B cell (primary cell): ENCODE measurements at regions of chr5 and their contacts with region 1.

Region 1: GRCh38 chr5:158695595-158696330 is 404.0 kb downstream of the EBF1 start:
- DNase-seq: peak; percentile 89
- ATAC-seq: peak; percentile 95
- H3K4me3 ChIP-seq: no peak overlapping the region
- H3K4me3 Mint-ChIP-seq: peak overlapping the region; percentile 35
- H3K27ac ChIP-seq: peak overlapping the region in 1 of 2 donors; percentile 53
- H3K27ac Mint-ChIP-seq: peak overlapping the region; percentile 28
- H3K4me1 ChIP-seq: peaks cover 17% of the 10 kb centered on the region in 2 donors
- H3K4me1 Mint-ChIP-seq: peaks cover 25% of the 10 kb centered on the region
- H3K27me3 ChIP-seq: no peaks in the 10 kb centered on the region
- H3K27me3 Mint-ChIP-seq: no peaks in the 10 kb centered on the region
- CTCF ChIP-seq: peak; percentile 99

Region 2: DNA sequence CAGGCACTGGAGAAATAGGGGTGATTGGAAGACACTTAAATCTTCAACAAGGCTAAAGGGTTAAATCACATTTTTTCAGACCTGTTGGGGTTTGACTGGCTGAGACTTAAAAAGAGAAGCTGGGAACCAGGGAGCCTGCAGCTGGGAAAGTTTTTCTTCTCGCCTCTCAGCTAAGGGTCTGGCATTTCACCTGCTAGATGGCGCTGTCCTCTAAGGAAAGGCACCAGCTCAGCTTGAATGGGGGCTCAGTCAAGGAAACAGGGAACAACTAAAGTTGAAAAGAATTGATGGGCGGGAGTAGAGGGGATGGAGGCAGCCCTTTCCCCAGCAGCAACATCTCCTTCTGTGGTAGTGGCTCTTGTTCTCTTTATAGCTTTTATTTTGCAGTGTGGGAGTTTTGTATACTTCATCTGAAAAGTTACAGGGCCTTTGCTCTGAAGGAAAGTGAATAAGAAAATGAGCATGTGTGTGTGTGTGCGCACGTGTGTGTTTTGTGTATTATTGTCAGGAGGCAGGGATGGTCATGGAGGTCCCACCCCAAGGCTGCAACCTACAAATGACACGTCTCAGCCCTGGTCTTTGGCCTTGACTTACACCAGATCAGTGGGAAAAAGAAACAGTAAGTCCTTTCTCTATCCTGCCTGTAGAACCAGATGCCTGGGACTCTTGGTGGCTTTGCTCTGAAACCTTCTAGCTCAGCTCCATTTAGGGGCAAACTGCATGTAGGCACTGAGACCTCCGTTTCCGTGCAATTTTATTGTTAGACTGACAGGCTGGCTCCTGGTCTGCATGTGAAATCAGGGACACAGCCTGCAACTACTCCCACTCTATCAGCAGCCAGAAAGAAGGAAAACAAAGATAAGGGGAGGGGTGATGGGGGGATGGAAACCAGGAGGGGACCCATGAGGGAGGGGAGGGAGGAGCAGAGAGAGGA is 520.6 kb before region 1 on chr5:
- CTCF ChIA-PET with region 1: interaction called, 134 read pairs
- POLR2A ChIA-PET with region 1: no interaction called
- intact Hi-C with region 1: loop called (anchors 1 kb)
- DNase-seq: peak; percentile 82
- ATAC-seq: peak; percentile 88
- H3K4me3 ChIP-seq: no peak overlapping the region
- H3K4me3 Mint-ChIP-seq: no peak overlapping the region
- H3K27ac ChIP-seq: no peak overlapping the region
- H3K27ac Mint-ChIP-seq: no peak overlapping the region
- H3K4me1 ChIP-seq: peaks cover 22 to 34% of the 10 kb centered on the region in 2 donors
- H3K4me1 Mint-ChIP-seq: peaks cover 30% of the 10 kb centered on the region
- H3K27me3 ChIP-seq: no peaks in the 10 kb centered on the region
- H3K27me3 Mint-ChIP-seq: no peaks in the 10 kb centered on the region
- CTCF ChIP-seq: peak; percentile 82

Region 3: GRCh38 chr5:158777647-158778350 is 82.0 kb after region 1 on chr5:
- CTCF ChIA-PET with region 1: interaction called, 17 read pairs
- POLR2A ChIA-PET with region 1: interaction called, 3 read pairs
- intact Hi-C with region 1: no loop called
- DNase-seq: no peak
- ATAC-seq: no peak
- H3K4me3 ChIP-seq: no peak overlapping the region
- H3K4me3 Mint-ChIP-seq: peak overlapping the region; percentile 27
- H3K27ac ChIP-seq: peak overlapping the region in 1 of 2 donors; percentile 10
- H3K27ac Mint-ChIP-seq: peak overlapping the region; percentile 64
- H3K4me1 ChIP-seq: peaks cover 82 to 89% of the 10 kb centered on the region in 2 donors
- H3K4me1 Mint-ChIP-seq: peaks cover 89% of the 10 kb centered on the region
- H3K27me3 ChIP-seq: no peaks in the 10 kb centered on the region
- H3K27me3 Mint-ChIP-seq: no peaks in the 10 kb centered on the region
- CTCF ChIP-seq: no peak

Region 4: DNA sequence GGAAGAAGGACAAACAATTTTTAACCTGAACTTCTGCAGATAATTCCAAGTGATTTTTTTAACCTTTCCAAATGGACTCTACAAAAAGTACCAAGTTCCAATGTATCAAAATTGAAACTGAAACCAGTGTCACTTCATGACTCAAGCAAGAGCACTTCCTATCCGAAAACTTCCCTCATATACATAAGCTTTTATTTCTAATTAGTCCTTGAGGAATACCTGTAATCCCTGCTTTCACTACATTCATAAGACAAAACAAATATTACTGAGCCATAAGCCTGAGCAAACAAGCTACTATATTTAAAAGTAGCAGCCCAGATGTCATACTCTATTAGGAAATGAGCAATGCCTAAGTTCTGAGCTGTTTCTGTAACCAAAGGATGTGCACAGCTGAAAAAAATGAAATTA is 179.5 kb after region 1 on chr5:
- CTCF ChIA-PET with region 1: interaction called, 7 read pairs
- POLR2A ChIA-PET with region 1: no interaction called
- intact Hi-C with region 1: loop called (anchors 5 kb)
- DNase-seq: peak; percentile 70
- ATAC-seq: peak; percentile 41
- H3K4me3 ChIP-seq: peak overlapping the region in 2 of 5 experiments; percentile 12 to 34
- H3K4me3 Mint-ChIP-seq: peak overlapping the region; percentile 84
- H3K27ac ChIP-seq: peak overlapping the region; percentile 74 to 80
- H3K27ac Mint-ChIP-seq: peak overlapping the region; percentile 76
- H3K4me1 ChIP-seq: peaks cover 71 to 81% of the 10 kb centered on the region in 2 donors
- H3K4me1 Mint-ChIP-seq: peaks cover 89% of the 10 kb centered on the region
- H3K27me3 ChIP-seq: no peaks in the 10 kb centered on the region
- H3K27me3 Mint-ChIP-seq: no peaks in the 10 kb centered on the region
- CTCF ChIP-seq: no peak

Region 5: GRCh38 chr5:159049844-159050315 is 354.1 kb after region 1 on chr5:
- CTCF ChIA-PET with region 1: interaction called, 9 read pairs
- POLR2A ChIA-PET with region 1: no interaction called
- intact Hi-C with region 1: loop called (anchors 2 kb)
- DNase-seq: peak; percentile 57
- ATAC-seq: no peak
- H3K4me3 ChIP-seq: peak overlapping the region in 3 of 5 experiments; percentile 16 to 28 (median 17)
- H3K4me3 Mint-ChIP-seq: peak overlapping the region; percentile 91
- H3K27ac ChIP-seq: peak overlapping the region; percentile 74 to 80
- H3K27ac Mint-ChIP-seq: peak overlapping the region; percentile 92
- H3K4me1 ChIP-seq: peaks cover 65 to 68% of the 10 kb centered on the region in 2 donors
- H3K4me1 Mint-ChIP-seq: peaks cover 95% of the 10 kb centered on the region
- H3K27me3 ChIP-seq: no peaks in the 10 kb centered on the region
- H3K27me3 Mint-ChIP-seq: no peaks in the 10 kb centered on the region
- CTCF ChIP-seq: peak; percentile 61

Region 6: GRCh38 chr5:159100025-159100781 is 404.4 kb after region 1 on chr5:
- CTCF ChIA-PET with region 1: interaction called, 443 read pairs
- POLR2A ChIA-PET with region 1: interaction called, 4 read pairs
- intact Hi-C with region 1: no loop called
- DNase-seq: peak; percentile 96
- ATAC-seq: peak; percentile 70
- H3K4me3 ChIP-seq: peak overlapping the region; percentile 86 to 99 (median 90)
- H3K4me3 Mint-ChIP-seq: peak overlapping the region; percentile 100
- H3K27ac ChIP-seq: peak overlapping the region; percentile 79 to 92
- H3K27ac Mint-ChIP-seq: peak overlapping the region; percentile 96
- H3K4me1 ChIP-seq: peaks cover 62% of the 10 kb centered on the region in 2 donors
- H3K4me1 Mint-ChIP-seq: peaks cover 66% of the 10 kb centered on the region
- H3K27me3 ChIP-seq: no peaks in the 10 kb centered on the region
- H3K27me3 Mint-ChIP-seq: no peaks in the 10 kb centered on the region
- CTCF ChIP-seq: no peak